CD8-positive, alpha-beta T cell (primary cell): ENCODE measurements at regions of chr10 and their contacts with region 1.

Region 1: GRCh38 chr10:114762811-114763210 is 58.8 kb upstream of the FHIP2A start:
- DNase-seq: no peak
- ATAC-seq: no peak
- H3K4me3 ChIP-seq: no peak overlapping the region
- H3K4me3 Mint-ChIP-seq: no peak overlapping the region
- H3K27ac ChIP-seq: no peak overlapping the region
- H3K27ac Mint-ChIP-seq: no peak overlapping the region
- H3K4me1 ChIP-seq: peaks cover 7% of the 10 kb centered on the region
- H3K4me1 Mint-ChIP-seq: peaks cover 7% of the 10 kb centered on the region
- H3K27me3 ChIP-seq: peaks cover 15 to 19% of the 10 kb centered on the region in 2 experiments
- H3K27me3 Mint-ChIP-seq: peaks cover 37% of the 10 kb centered on the region
- CTCF ChIP-seq: no peak

Region 2: GRCh38 chr10:114801411-114801813 is 38.6 kb after region 1 on chr10:
- CTCF ChIA-PET with region 1: no interaction called
- POLR2A ChIA-PET with region 1: no interaction called
- intact Hi-C with region 1: loop called in 1 of 2 experiments (anchors 1 kb)
- DNase-seq: peak in 5 of 9 experiments; percentile 12 to 55 (median 34)
- ATAC-seq: peak; percentile 78
- H3K4me3 ChIP-seq: no peak overlapping the region
- H3K4me3 Mint-ChIP-seq: peak overlapping the region; percentile 51
- H3K27ac ChIP-seq: peak overlapping the region in 1 of 2 experiments; percentile 11
- H3K27ac Mint-ChIP-seq: peak overlapping the region; percentile 34
- H3K4me1 ChIP-seq: peaks cover 11% of the 10 kb centered on the region
- H3K4me1 Mint-ChIP-seq: peaks cover 19% of the 10 kb centered on the region
- H3K27me3 ChIP-seq: no peaks in the 10 kb centered on the region
- H3K27me3 Mint-ChIP-seq: no peaks in the 10 kb centered on the region
- CTCF ChIP-seq: no peak